ENCODE measurements at regions of chr20 and their contacts with region 1.

Region 1: GRCh38 chr20:2851086-2851485 is 10.5 kb downstream of the VPS16 start:
- DNase-seq: no peak
- ATAC-seq: no peak
- H3K4me3 ChIP-seq: no peak overlapping the region
- H3K27ac ChIP-seq: no peak overlapping the region
- H3K4me1 ChIP-seq: no peaks in the 10 kb centered on the region
- H3K27me3 ChIP-seq: no peaks in the 10 kb centered on the region
- CTCF ChIP-seq: no peak

Region 2: DNA sequence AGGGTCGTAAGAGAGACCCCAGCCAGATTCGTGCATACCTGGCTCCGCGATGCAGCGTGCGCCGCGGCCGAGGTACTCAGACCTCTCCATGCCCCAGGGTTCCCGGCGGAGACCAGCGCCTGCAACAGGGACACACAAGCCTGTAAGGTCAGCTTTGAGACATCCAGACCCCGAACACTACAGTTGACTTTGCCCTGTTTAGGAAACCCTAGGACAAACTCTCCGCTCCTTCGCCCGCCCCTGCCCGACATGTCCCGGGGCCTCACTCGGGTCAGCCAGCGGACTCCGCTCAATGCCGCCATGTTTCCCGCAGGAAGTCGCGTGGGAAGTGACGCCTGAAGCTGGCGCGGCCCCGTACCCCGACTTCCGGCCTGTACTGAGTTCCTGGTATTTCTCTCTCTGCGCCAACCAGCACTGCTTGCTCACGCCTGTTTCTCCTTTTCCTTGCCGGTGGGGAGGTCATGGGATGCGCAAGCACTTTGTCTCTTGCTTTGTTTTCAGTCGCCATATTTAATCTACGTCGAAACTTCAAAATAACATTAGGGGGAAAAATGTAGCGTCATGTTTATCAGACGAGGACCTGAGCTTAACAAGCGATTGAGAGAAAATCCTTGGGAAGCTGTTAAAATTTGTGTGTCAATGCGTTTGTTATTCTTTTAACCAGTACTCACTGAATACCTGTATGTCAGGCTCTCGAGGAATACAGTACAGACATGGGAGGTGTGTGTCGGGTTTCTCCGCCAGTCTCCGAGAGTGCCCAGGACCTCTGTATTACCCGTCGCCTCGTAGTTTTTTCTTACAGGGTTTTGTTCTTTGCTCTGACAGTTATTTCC is 187.0 kb before region 1 on chr20 and contains the start of gene IDH3B:
- intact Hi-C with region 1: no loop called
- DNase-seq: peak; percentile 86 to 96 (median 91)
- ATAC-seq: peak; percentile 99 to 100 (median 99)
- H3K4me3 ChIP-seq: peak within 1 kb of the TSS; percentile 95 to 99 (median 96)
- H3K27ac ChIP-seq: peak within 1 kb of the TSS; percentile 61 to 90 (median 84)
- H3K4me1 ChIP-seq: peaks cover 0 to 5% (median 0%) of the 10 kb centered on the region in 3 donors
- H3K27me3 ChIP-seq: no peaks in the 10 kb centered on the region
- CTCF ChIP-seq: no peak
- total RNA-seq, gene IDH3B: 27.3 to 41.3 (median 31.3) TPM

Region 3: DNA sequence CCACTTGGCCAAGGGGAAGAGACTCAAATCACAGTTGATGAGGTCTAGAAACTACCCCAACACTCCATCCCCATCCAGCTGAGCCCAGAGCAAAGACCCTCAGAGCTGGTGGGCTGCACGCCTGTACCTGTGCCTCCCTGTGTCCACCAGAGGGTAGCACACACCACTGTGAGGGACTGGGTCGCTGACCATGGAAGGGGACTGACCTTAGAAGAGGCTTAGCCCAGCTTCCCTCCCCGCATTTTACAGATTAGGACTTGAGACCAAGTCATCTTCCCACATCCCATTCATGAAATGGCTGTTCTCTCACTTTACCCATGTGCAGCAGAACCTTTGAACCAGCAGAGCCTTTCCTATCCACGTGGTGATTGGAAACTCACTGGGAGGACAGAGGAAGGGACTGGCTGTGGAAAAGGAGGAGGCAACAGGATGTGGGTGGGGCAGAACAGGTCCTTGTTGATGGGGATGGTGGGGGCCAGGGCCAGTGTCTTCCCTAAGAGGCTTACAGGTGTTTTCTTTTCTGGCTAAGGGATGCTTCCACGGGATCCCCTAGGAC is 95.0 kb before region 1 on chr20:
- intact Hi-C with region 1: loop called in 1 of 3 experiments (anchors 5 kb)
- DNase-seq: no peak
- ATAC-seq: peak in 3 of 4 donors; percentile 25 to 57 (median 49)
- H3K4me3 ChIP-seq: no peak overlapping the region
- H3K27ac ChIP-seq: no peak overlapping the region
- H3K4me1 ChIP-seq: peaks cover 0 to 7% (median 3%) of the 10 kb centered on the region in 3 donors
- H3K27me3 ChIP-seq: no peaks in the 10 kb centered on the region
- CTCF ChIP-seq: peak in 3 of 4 donors; percentile 14 to 43 (median 39)